ENCODE measurements at regions of chr18 and their contacts with region 1.

Region 1: DNA sequence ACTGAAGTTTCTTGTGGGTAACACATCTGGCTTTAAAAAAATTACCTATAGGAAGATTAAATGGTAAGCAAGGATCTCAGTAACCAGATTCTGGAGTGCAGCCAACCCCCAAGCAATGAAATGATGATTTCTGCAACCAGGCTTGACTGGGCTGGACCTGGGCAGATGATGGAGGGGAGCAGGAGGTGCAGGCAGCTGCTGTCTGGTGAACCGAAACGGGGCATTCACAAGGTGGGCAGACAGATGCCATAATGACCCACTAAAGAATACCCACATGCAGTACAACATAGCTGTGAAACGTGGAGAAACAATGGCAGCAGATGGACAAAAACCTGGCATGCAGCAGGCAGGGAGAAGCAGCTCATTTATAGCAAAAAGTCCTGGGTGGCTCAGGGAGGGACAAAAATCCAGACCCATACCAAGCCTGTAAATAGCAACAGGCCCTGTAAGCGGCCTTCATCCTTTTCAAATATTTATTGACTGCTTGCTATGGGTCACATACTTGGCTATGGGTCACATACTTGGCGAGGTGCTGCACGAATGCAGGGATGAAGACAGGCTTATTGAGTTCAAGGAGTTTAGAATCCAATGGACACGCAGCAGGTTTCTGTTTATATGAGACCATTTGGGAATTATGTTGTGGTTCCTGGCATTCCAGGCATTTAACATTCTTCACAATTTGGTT is 244.7 kb downstream of the HRH4 start:
- DNase-seq: no peak

Region 2: DNA sequence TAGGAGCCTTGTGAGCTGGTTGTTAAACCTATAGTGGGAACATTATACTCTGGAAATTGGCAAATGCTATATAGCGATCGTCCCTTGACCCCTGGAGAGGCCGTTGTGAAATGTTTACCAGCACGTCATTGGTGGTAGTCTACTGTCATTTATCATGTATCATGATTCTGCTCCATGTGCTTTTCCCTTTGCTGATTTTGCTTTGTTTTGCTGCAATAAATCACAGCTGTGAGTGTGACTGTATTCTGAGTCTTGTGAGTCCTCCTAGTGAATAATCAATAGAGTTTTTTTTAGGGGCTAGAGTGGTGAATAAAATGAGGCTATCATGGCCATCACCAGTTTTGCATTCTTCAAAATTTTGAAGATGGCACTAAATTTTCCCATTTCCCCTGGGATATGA is 55.5 kb before region 1 on chr18:
- intact Hi-C with region 1: loop called (anchors 10 kb)
- DNase-seq: no peak